Activated T-helper 1 cell treated with anti-CD3 and anti-CD28 coated beads, Interleukin-12 subunit alpha, Interleukin-12 subunit beta, Interleukin-2, Interleukin-4 antibody, amounts not matched to agents 30 ng/mL and 10 ng/mL and 1 ng/mL, durations not matched to agents 14 hours and 24 hours and 36 hours (primary cell): ENCODE measurements at regions of chr19 and their contacts with region 1.

Region 1: GRCh38 chr19:46661020-46661731 is at the start of gene DACT3:
- DNase-seq: peak; percentile 100
- H3K4me3 Mint-ChIP-seq: peak within 1 kb of the TSS; percentile 72
- H3K27ac Mint-ChIP-seq: peak within 1 kb of the TSS; percentile 81
- H3K4me1 Mint-ChIP-seq: peaks cover 19% of the 10 kb centered on the region
- H3K27me3 Mint-ChIP-seq: peaks cover 43% of the 10 kb centered on the region
- total RNA-seq, gene DACT3: 4.3 and 5.7 TPM in 2 replicates

Region 2: GRCh38 chr19:46529622-46530462 is 131.3 kb before region 1 on chr19:
- intact Hi-C with region 1: loop called (anchors 1 kb)
- DNase-seq: peak; percentile 60
- H3K4me3 Mint-ChIP-seq: no peak overlapping the region
- H3K27ac Mint-ChIP-seq: no peak overlapping the region
- H3K4me1 Mint-ChIP-seq: peaks cover 15% of the 10 kb centered on the region
- H3K27me3 Mint-ChIP-seq: peaks cover 2% of the 10 kb centered on the region

Region 3: DNA sequence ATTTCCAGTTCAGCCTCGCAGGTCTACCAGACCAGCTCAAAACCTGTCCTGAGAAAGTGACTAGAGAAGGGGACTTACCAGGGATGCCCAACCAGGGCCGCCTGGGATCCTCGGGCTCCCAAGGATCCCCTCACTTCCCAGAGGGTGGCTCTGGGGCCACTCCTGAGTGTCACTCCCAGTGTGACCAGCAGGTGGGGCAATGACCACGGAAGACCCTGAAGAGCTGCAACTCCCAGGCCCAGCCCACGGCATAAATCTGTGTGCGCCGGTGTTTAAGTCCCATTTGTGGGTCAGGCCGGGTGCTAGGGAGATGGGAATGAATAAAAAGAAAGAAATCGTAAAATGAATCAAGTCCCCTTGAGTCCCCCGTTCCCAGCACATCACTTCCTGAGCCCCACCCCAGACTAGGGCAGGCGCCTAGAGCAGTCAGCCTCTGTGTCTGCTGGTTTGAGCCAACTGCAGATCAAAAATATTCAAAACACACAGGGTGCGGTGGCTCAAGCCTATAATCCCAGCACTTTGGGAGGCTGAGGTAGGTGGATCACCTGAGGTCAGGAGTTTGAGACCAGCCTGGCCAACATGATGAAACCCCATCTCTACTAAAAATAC is 47.0 kb before region 1 on chr19:
- intact Hi-C with region 1: loop called (anchors 1 kb)
- DNase-seq: peak; percentile 63
- H3K4me3 Mint-ChIP-seq: peak overlapping the region; percentile 64
- H3K27ac Mint-ChIP-seq: peak overlapping the region; percentile 92
- H3K4me1 Mint-ChIP-seq: peaks cover 74% of the 10 kb centered on the region
- H3K27me3 Mint-ChIP-seq: no peaks in the 10 kb centered on the region

Region 4: GRCh38 chr19:46634045-46634655 is 27.0 kb before region 1 on chr19:
- intact Hi-C with region 1: loop called (anchors 1 kb)
- DNase-seq: peak; percentile 94
- H3K4me3 Mint-ChIP-seq: peak overlapping the region; percentile 85
- H3K27ac Mint-ChIP-seq: peak overlapping the region; percentile 75
- H3K4me1 Mint-ChIP-seq: peaks cover 11% of the 10 kb centered on the region
- H3K27me3 Mint-ChIP-seq: peaks cover 2% of the 10 kb centered on the region

Region 5: GRCh38 chr19:46717034-46717723 is 56.0 kb after region 1 on chr19 and contains the start of gene PRKD2:
- intact Hi-C with region 1: loop called (anchors 2 kb)
- DNase-seq: peak; percentile 86
- H3K4me3 Mint-ChIP-seq: peak within 1 kb of the TSS; percentile 93
- H3K27ac Mint-ChIP-seq: peak within 1 kb of the TSS; percentile 94
- H3K4me1 Mint-ChIP-seq: peaks cover 42% of the 10 kb centered on the region
- H3K27me3 Mint-ChIP-seq: no peaks in the 10 kb centered on the region
- total RNA-seq, gene PRKD2: 88.6 and 92.9 TPM in 2 replicates

Region 6: DNA sequence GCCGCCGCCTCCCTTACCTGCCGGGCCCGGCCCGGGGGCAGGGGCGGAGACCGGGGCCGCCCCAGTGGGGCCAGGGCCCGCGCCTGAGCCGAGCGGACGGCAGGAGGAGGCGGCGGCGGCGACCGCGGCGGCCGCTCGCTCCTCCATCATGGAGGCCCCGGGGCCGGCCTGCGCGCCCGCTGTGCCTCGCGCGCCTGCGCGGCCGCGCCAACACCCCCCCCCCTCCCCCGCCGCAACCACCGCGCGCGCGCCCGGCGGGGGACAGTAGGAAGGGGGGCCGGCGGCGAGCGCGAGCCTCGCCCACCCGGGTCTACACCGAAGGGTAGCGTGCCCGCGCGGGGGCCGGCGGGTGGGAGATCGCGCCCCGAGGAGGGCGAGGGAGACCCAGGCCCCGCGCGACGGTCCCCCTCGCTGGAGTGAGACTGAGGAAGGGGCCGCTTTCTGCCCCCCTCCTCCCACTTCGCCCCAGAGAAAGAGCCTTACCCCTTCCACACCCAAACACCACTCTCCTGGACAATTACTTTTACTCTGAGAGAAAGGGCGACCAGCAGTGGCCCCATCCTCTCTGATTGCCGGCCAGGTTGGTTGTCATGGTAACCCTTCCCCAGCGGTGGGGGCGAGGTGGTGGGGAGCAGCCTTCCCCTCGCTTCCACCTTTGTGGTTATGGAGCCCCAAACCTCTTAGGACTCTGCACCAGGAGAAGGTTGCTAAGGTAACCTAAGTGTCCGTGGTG is 85.3 kb after region 1 on chr19 and contains the start of gene STRN4:
- intact Hi-C with region 1: loop called (anchors 1 kb)
- DNase-seq: peak; percentile 31
- H3K4me3 Mint-ChIP-seq: peak within 1 kb of the TSS; percentile 95
- H3K27ac Mint-ChIP-seq: peak within 1 kb of the TSS; percentile 91
- H3K4me1 Mint-ChIP-seq: peaks cover 46% of the 10 kb centered on the region
- H3K27me3 Mint-ChIP-seq: no peaks in the 10 kb centered on the region
- total RNA-seq, gene STRN4: 106 and 116 TPM in 2 replicates

Region 7: DNA sequence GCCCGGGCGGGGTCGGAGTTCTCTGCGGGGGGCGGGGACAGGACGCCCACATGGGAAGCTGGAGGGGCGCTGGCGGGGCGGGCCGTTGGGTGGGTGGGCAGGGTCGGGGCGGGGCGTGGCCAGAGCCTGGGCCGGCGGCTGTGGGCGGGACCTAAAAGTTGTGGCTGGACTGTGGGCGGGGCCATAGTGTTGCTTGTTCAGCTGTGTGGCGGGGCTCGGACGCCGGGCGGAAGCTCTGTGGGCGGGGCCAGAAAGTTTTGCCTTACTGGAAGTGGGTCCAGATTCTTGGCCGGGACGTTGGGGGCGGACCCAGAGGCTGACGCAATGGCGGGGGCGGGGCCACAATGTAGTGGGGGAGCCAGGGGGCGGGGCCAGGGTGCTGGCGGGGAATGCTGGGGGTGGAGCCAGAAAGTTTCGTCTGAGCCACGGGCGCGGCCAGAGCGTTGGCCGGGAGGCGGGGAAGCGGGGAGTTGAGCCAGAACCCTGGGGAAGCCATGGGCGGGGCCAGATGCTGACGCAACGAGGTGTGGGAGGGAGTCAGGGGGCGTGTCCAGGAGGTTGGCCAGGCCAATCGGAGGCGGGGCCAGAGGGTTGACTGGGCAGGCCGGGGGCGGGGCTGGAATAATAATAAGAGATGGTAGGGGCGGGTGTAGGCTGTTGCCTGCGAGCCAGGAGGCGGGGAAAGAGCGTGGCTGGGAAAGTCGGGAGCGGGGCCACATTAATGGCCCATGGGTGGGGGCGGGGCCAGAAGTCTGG is 595.7 kb after region 1 on chr19:
- intact Hi-C with region 1: loop called (anchors 2 kb)
- DNase-seq: peak; percentile 99
- H3K4me3 Mint-ChIP-seq: peak overlapping the region; percentile 86
- H3K27ac Mint-ChIP-seq: peak overlapping the region; percentile 95
- H3K4me1 Mint-ChIP-seq: peaks cover 31% of the 10 kb centered on the region
- H3K27me3 Mint-ChIP-seq: peaks cover 2% of the 10 kb centered on the region

Region 8: DNA sequence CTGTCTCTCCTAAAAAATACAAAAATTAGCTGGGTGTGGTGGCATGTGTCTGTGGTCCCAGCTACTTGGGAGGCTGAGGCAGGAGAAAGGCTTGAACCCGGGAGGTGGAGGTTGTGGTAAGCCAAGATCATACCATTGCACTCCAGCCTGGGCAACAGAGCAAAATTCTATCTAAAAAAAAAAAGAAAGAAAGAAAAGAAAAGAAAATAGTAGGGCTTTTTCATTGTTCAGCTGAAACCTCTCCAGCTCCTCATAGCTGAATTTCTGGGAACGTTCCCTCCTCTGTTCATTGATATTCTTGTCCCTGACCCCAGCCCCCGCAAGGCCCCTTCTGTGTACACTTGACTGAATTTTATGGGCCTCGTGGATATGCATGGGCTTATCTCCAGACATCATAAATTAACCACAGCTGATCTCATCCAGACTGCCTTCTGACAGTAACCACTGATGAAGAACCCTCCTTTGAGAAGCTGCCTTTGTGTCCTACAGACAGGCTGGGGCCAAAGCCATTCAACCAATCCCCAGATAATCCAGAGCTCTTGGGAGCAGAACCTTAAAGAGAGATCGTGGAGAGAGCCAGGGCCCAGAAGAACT is 1333.1 kb after region 1 on chr19 and contains the start of gene ELSPBP1:
- intact Hi-C with region 1: no loop called
- DNase-seq: no peak
- H3K4me3 Mint-ChIP-seq: no peak within 1 kb of the TSS
- H3K27ac Mint-ChIP-seq: no peak within 1 kb of the TSS
- H3K4me1 Mint-ChIP-seq: no peaks in the 10 kb centered on the region
- H3K27me3 Mint-ChIP-seq: peaks cover 7% of the 10 kb centered on the region
- total RNA-seq, gene ELSPBP1: not detected in 2 replicates